ENCODE measurements at regions of chr1 and their contacts with region 1.

Region 1: GRCh38 chr1:235075188-235075926 is 53.3 kb downstream of the TOMM20 start:
- DNase-seq: peak; percentile 80
- CTCF ChIP-seq: no peak

Region 2: GRCh38 chr1:234544087-234544579 is 531.2 kb before region 1 on chr1:
- in situ Hi-C with region 1: no loop called
- DNase-seq: no peak
- CTCF ChIP-seq: no peak

Region 3: DNA sequence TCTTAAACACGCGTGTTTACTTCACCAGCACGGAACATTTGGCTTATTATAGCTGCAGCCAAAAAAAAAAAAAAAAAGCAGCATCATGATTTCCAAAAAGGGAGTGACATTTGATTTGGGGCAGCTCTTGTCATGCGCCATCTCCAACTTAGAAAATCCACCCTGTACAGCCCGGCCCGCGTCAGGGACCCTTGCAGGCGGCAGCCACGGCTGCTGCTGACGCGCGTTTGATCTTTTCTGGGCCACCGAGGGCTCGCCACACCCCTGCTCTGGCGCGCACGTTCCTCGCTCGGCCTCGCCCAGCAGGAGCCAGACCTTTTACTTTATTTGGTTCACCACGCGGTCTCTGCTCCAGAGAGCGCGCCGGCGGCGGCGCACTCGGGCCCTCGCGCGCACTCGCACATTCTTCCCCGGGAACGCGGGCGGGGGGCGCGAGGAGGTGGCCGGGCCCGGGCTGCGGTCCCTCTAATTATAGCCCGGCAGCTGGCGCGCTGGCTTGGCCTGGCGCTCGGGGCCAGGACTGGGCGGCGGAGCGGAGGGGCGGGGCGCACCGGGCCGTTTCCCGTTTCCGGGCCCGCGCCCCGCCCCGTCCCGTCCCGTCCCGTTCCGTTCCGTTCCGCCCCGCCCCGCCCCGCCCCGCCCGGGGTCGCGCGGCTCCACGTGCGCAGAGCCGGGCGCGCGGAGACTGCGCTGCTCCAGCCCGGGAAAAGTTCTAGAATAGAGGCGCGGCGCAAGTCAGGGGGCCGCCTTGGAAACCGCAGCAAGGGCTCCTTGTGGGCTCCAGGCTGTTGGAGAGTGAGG is 475.5 kb before region 1 on chr1:
- in situ Hi-C with region 1: loop called (anchors 5 kb)
- DNase-seq: peak; percentile 85
- CTCF ChIP-seq: no peak

Region 4: GRCh38 chr1:234842726-234843641 is 232.4 kb before region 1 on chr1:
- in situ Hi-C with region 1: loop called (anchors 10 kb)
- DNase-seq: peak; percentile 69
- CTCF ChIP-seq: no peak

Region 5: GRCh38 chr1:234907940-234908405 is 167.4 kb before region 1 on chr1:
- in situ Hi-C with region 1: no loop called
- DNase-seq: no peak
- CTCF ChIP-seq: no peak

Region 6: GRCh38 chr1:234978397-234979295 is 96.7 kb before region 1 on chr1:
- in situ Hi-C with region 1: loop called (anchors 10 kb)
- DNase-seq: peak; percentile 61
- CTCF ChIP-seq: peak; percentile 4

Region 7: GRCh38 chr1:235011599-235012435 is 63.5 kb before region 1 on chr1:
- in situ Hi-C with region 1: loop called (anchors 10 kb)
- DNase-seq: peak; percentile 83
- CTCF ChIP-seq: no peak

Region 8: GRCh38 chr1:235304549-235305451 is 229.4 kb after region 1 on chr1:
- in situ Hi-C with region 1: no loop called
- DNase-seq: no peak
- CTCF ChIP-seq: no peak

Region 9: GRCh38 chr1:235843461-235843961 is 768.2 kb after region 1 on chr1:
- in situ Hi-C with region 1: no loop called
- DNase-seq: peak; percentile 18
- CTCF ChIP-seq: peak; percentile 31

Measured in GM13976 (cell line).